Right ventricle myocardium superior (tissue), 1 donor: ENCODE measurements at regions of chr4 and their contacts with region 1.

Region 1: DNA sequence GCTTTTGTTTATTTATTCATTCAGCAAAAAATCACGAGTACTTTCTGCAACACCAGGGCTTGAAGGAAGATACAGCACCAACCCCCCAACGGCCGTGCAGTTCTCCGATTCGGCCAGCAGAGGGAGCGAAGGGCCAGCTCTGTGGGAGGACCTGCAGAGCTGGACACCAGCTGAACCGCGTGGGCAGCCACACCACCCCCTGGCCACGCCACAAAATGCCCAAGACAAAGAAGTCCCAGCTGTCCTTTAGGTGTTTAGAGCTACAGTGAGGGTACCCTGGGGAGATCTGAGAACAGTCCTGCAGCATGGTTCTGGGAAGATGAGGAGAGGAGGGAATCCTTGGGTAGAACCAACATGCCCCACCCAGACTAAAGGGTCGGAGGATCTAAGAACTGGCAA is 83.1 kb downstream of the RELL1 start:
- DNase-seq: peak; percentile 90
- ATAC-seq: peak; percentile 97

Region 2: GRCh38 chr4:37686373-37687193 is 83.5 kb after region 1 on chr4 and contains the start of gene RELL1:
- intact Hi-C with region 1: loop called (anchors 10 kb)
- DNase-seq: peak; percentile 100
- ATAC-seq: peak; percentile 96
- total RNA-seq, gene RELL1: 15.8 TPM

Region 3: DNA sequence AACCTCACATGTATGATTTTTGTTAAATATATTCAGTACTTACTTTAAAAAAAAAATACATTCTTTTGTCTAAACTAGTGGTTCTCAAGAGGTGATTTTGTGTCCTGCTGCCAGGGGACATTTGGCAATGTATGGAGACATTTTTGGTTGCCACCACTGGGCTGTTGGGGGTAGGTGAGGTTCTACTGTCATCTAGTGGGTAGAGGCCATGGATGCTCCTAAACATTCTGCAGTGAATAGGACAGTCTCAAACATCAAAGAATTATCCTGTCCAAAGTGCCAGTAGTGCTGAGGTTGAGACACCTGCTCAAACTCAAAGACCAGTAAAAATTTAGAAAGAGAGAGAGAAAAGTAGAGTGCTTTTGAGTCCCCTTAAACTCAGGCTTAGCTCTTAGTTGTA is 190.5 kb after region 1 on chr4:
- intact Hi-C with region 1: loop called (anchors 5 kb)
- DNase-seq: no peak
- ATAC-seq: peak; percentile 87

Region 4: DNA sequence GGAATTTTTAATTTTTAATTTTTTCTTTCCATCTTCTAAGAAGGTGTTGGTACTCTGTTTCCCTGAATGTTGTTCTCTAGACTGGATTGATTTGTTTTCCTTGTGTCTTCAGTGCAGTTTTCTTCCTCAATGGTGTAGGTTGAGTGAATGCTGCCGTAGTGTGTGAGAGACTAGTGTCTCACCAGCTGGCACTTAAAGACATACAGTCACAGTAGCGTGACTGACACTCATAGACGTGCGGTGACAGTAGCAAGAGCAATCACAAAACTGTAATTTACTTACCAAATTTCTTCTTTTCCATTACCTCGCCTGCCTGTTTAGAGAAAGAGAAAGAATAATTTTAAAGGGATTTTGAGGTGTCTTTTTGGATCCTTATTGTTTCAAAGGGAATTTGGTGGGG is 202.0 kb after region 1 on chr4:
- intact Hi-C with region 1: no loop called
- DNase-seq: no peak
- ATAC-seq: no peak